ENCODE measurements at regions of chr6 and their contacts with region 1.

Region 1: DNA sequence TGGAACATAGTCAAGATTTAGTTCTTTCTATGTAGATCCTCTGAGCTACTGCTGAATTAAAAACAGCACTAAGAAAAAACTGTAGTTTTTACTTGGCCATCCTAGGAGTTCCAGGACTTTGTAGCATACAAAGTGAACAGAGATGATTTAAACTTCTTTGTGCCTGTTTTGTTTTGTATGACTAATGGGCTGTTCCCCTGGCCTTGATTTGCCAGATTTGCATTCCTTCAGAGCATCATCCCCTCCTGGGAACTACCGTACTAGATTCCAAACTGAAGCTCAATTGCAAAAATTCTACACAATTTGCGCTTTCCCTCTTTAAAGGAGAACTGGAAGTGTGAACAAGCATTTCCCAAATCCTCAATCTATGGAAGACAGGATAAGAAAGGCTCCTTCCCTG is 23.1 kb downstream of the ACOT13 start:
- DNase-seq: no peak
- H3K4me3 Mint-ChIP-seq: no peak overlapping the region
- H3K27ac Mint-ChIP-seq: no peak overlapping the region
- H3K4me1 Mint-ChIP-seq: peaks cover 10% of the 10 kb centered on the region
- H3K27me3 Mint-ChIP-seq: no peaks in the 10 kb centered on the region

Region 2: DNA sequence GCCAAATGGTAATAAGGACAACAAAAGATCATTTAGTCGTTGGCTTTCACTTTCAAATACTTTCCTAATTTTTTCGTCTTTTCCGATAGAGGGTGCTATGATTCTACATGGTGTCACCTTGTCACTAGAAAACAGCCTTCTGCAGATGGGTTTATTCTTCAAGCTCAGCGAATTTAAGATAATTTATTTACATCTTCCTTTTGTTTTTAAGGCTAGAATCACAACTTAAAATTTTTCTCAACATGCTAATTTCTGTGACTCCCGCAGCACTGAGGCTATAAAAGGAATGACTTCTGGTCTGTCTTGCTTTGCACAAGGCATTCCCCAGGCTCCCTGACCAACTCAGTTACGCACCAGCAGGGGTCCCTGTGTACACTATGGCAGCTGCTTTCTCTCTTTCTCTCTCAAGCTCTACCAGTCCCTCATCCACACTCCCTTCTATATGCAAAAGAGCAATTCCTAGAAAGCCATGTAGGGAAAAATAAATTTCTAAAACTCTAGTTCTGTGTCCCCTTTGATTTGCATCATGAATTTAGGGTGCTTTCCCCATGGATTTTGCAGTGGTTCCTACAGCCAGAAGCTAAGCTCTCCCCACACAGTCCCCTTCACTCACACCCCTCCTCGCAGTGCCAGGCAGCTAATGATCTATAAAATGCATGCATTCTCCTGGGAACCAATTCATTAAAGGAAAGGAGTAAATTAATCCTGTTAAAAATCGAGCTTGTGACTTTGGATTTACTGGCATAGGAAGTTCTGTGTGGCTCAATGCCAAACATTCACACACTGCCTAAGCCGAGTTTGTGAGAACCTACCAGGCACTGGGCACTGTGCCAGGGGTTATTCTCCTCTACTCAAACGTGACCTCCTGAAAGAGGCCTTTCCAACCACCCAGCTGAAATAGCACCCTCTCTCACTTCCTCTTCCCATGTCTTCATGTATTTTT is 406.6 kb before region 1 on chr6:
- intact Hi-C with region 1: loop called (anchors 10 kb)
- DNase-seq: no peak
- H3K4me3 Mint-ChIP-seq: no peak overlapping the region
- H3K27ac Mint-ChIP-seq: no peak overlapping the region
- H3K4me1 Mint-ChIP-seq: peaks cover 7% of the 10 kb centered on the region
- H3K27me3 Mint-ChIP-seq: peaks cover 6% of the 10 kb centered on the region

Region 3: DNA sequence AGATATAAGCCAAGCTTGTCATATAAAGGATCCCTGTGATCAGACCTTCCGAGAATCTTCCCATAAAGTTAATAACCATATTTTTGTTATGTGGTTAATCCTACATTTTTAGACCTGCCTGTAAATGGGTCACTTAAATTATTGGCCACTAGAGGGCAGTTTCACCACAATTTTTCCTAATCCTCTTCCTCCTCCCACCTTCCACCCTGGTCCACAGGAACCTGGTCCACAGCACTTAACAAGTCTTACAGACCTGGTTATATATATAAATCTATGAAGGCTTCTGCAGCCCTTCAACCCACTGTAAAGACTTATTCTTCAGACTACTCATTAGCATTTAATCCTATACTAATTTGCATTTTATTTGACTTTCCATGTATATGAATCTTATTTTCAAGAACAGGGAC is 258.9 kb before region 1 on chr6:
- intact Hi-C with region 1: loop called (anchors 2 kb)
- DNase-seq: no peak
- H3K4me3 Mint-ChIP-seq: no peak overlapping the region
- H3K27ac Mint-ChIP-seq: no peak overlapping the region
- H3K4me1 Mint-ChIP-seq: no peaks in the 10 kb centered on the region
- H3K27me3 Mint-ChIP-seq: no peaks in the 10 kb centered on the region

Region 4: GRCh38 chr6:24494821-24495795 is 194.9 kb before region 1 on chr6 and contains the start of gene ALDH5A1:
- intact Hi-C with region 1: loop called (anchors 10 kb)
- DNase-seq: peak; percentile 65
- H3K4me3 Mint-ChIP-seq: peak within 1 kb of the TSS; percentile 87
- H3K27ac Mint-ChIP-seq: peak within 1 kb of the TSS; percentile 19
- H3K4me1 Mint-ChIP-seq: peaks cover 21% of the 10 kb centered on the region
- H3K27me3 Mint-ChIP-seq: peaks cover 2% of the 10 kb centered on the region
- total RNA-seq, gene ALDH5A1: 11.3 and 11.9 TPM in 2 replicates

Region 5: GRCh38 chr6:24520929-24521546 is 168.9 kb before region 1 on chr6:
- intact Hi-C with region 1: loop called (anchors 2 kb)
- DNase-seq: no peak
- H3K4me3 Mint-ChIP-seq: no peak overlapping the region
- H3K27ac Mint-ChIP-seq: no peak overlapping the region
- H3K4me1 Mint-ChIP-seq: peaks cover 20% of the 10 kb centered on the region
- H3K27me3 Mint-ChIP-seq: no peaks in the 10 kb centered on the region

Region 6: GRCh38 chr6:24666641-24667377 is 23.2 kb before region 1 on chr6 and contains the starts of genes ACOT13 and TDP2:
- intact Hi-C with region 1: loop called (anchors 1 kb)
- DNase-seq: peak; percentile 97
- H3K4me3 Mint-ChIP-seq: peak within 1 kb of the TSS; percentile 92
- H3K27ac Mint-ChIP-seq: peak within 1 kb of the TSS; percentile 99
- H3K4me1 Mint-ChIP-seq: peaks cover 61% of the 10 kb centered on the region
- H3K27me3 Mint-ChIP-seq: no peaks in the 10 kb centered on the region
- total RNA-seq, gene ACOT13: 27.0 and 27.4 TPM in 2 replicates
- total RNA-seq, gene TDP2: 46.1 and 47.4 TPM in 2 replicates

Region 7: DNA sequence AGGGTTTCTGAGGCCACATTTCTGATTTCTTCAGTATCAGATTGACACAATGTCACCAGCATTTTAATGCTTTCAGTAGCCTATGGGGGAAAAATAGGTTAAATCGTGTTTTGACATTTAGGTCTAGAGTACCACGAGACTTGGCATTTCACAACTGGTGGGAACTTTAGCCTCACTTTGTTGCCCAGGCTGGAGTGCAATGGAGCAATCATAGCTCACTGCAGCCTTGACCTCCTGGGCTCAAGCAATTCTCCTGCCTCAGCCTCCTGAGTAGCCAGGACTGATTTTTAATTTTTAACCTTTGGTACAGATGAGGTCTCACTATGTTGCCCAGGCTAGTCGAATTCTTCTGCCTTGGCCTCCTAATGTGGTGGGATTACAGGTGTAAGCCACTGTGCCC is 119.8 kb after region 1 on chr6:
- intact Hi-C with region 1: no loop called
- DNase-seq: no peak
- H3K4me3 Mint-ChIP-seq: no peak overlapping the region
- H3K27ac Mint-ChIP-seq: no peak overlapping the region
- H3K4me1 Mint-ChIP-seq: no peaks in the 10 kb centered on the region
- H3K27me3 Mint-ChIP-seq: no peaks in the 10 kb centered on the region

Measured in activated T-helper 1 cell treated with anti-CD3 and anti-CD28 coated beads, Interleukin-12 subunit alpha, Interleukin-12 subunit beta, Interleukin-2, Interleukin-4 antibody, amounts not matched to agents 30 ng/mL and 10 ng/mL and 1 ng/mL, durations not matched to agents 14 hours and 24 hours and 36 hours (primary cell).